Spleen (tissue), 13 donors: ENCODE measurements at regions of chr18 and their contacts with region 1.

Region 1: GRCh38 chr18:29892960-29893558 is 1149.5 kb downstream of the DSC3 start:
- DNase-seq: no peak
- H3K4me3 ChIP-seq: no peak overlapping the region
- H3K27ac ChIP-seq: no peak overlapping the region
- H3K4me1 ChIP-seq: no peaks in the 10 kb centered on the region
- H3K27me3 ChIP-seq: no peaks in the 10 kb centered on the region
- CTCF ChIP-seq: peak in 2 of 11 experiments; percentile 23 to 33
- POLR2A ChIP-seq: no peak

Region 2: DNA sequence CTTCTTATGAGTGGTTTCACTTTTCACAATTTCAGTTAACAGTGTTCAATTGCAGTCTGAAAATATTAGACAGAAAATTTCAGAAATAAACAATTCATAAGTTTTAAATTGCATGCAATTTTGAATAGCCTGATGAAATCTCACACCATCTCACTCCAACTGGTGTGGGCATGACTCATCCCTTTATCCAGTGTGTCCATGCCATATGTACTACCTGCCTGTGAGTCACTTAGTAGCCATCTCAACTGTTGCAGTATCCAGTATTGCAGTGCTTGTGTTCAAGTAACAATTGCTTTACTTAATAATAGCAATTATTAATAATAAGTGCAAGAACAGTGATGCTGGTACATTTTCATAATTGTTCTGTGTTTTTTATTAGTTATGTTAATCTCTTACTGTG is 53.0 kb before region 1 on chr18:
- intact Hi-C with region 1: no loop called
- DNase-seq: no peak
- H3K4me3 ChIP-seq: no peak overlapping the region
- H3K27ac ChIP-seq: no peak overlapping the region
- H3K4me1 ChIP-seq: no peaks in the 10 kb centered on the region
- H3K27me3 ChIP-seq: no peaks in the 10 kb centered on the region
- CTCF ChIP-seq: no peak
- POLR2A ChIP-seq: no peak

Region 3: DNA sequence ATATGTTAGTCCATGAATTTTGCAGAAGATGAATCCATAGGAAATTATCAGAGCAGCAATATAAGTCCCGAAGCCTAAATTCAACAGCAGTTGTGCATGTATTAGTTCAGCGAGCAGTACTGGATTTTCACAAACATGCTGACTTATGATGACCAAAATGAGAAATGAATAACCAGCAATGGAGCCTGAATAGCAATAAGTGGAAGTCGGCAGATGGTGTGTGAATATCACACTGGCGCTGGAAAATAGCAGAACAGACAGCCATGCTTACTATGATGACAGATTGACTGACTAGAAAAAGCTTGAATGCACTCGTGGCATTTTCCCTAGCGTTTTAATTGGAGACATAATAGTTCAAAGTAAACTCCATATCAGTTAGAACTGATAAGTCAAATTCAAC is 35.0 kb after region 1 on chr18:
- intact Hi-C with region 1: no loop called
- DNase-seq: no peak
- H3K4me3 ChIP-seq: no peak overlapping the region
- H3K27ac ChIP-seq: no peak overlapping the region
- H3K4me1 ChIP-seq: no peaks in the 10 kb centered on the region
- H3K27me3 ChIP-seq: no peaks in the 10 kb centered on the region
- CTCF ChIP-seq: no peak
- POLR2A ChIP-seq: no peak

Region 4: DNA sequence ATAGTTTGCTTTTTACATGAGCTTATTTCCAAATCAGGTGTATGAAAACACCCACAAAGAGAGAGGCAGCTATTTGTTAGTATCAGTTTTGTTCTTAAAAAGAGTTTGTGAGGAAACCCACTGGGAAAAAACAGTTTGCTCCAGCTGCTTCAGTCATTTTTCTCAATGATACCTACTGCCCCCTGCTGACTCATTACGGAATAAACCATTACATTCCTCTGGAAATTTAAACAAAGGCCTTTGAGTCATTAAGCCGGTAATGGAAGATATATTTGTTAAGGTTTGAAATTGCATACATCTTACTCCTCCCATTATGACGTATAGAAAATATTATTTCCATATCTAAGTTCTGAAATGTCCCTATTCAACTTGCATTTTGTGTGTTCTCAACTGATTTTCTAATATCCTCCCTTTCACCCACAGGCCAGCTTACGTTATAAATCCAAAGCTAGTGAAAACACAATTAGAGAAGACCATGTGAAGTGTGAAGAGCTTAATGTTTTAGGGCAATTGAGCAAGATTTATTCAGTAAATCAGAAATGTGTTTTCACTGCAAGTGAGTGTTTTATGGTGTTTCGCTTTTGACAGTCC is 387.9 kb after region 1 on chr18:
- intact Hi-C with region 1: loop called (anchors 10 kb)
- DNase-seq: no peak
- H3K4me3 ChIP-seq: no peak overlapping the region
- H3K27ac ChIP-seq: no peak overlapping the region
- H3K4me1 ChIP-seq: no peaks in the 10 kb centered on the region
- H3K27me3 ChIP-seq: no peaks in the 10 kb centered on the region
- CTCF ChIP-seq: peak in 6 of 11 experiments; percentile 29 to 52 (median 48)
- POLR2A ChIP-seq: no peak